ENCODE measurements at regions of chr4 and their contacts with region 1.

Region 1: DNA sequence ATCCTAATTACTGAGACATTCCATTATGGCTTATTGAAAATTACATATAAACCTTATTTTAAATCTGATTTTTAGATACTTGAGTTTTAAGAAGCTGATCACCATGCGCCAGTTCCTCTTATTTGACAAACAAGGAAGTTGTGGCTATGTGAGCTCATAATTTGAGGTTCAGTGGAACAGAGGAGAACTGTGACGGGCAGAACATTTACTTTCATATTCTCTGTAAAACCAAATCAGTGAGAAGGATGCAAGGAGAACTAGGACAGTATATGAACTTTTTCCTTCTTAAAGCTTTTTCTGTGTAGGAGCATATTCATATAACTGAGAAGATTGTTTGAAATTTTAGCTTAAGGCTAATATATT is 25.3 kb downstream of the STIM2 start:
- DNase-seq: no peak
- ATAC-seq: peak; percentile 67
- H3K4me3 Mint-ChIP-seq: peak overlapping the region; percentile 73
- H3K27ac Mint-ChIP-seq: peak overlapping the region; percentile 95
- H3K4me1 Mint-ChIP-seq: peaks cover 90% of the 10 kb centered on the region
- H3K27me3 Mint-ChIP-seq: no peaks in the 10 kb centered on the region
- CTCF ChIP-seq: no peak

Region 2: DNA sequence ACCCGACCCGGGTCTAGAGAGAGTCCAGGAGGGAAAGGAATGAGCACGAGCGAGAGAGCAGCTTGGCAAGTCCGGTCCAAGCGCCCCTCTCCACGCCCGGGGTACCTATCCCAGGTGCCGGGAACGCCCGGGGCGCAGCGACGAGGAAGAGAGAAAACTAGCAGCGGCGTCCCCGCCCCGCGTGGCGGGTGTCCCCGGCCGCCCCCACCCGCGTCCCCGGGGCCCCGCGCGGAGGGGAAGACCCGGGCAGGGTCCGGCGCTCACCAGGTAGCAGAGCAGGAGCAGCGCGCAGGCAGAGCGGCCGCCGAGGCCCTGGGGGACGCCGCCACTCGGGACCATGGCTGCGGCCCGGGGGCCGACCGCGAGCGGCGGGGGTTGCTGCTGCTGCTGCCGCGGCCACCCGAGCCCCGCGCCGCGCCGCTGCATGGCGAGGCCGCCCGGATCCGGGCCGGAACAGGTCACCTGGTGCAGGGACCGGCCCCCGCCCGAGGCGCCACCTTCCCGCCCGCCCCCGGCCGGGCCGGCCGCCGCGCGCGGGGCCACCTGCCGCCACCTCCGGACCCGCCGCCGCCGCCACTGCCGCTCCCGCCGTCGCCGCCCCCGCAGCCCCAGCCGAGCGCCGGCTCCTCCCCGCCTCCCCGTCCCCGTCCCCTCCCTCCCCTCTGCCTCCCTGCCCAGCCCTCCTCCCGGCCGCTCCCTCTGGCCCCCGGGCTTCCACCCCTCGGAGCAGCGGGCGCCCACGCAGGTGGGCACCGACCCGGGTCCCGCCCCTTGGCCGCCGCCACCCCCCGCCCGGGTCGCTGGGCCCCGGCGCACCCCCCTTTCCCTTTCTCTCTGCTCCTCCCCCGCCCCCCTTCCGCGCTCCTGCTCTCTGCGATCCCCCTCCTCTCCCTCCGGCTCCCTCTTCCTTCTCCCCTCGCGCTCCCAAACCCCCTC is 1023.2 kb before region 1 on chr4 and contains the start of gene SEL1L3:
- CTCF ChIA-PET with region 1: no interaction called
- POLR2A ChIA-PET with region 1: no interaction called
- intact Hi-C with region 1: loop called (anchors 5 kb)
- DNase-seq: peak; percentile 68
- ATAC-seq: peak; percentile 39
- H3K4me3 Mint-ChIP-seq: peak within 1 kb of the TSS; percentile 98
- H3K27ac Mint-ChIP-seq: peak within 1 kb of the TSS; percentile 99
- H3K4me1 Mint-ChIP-seq: peaks cover 84% of the 10 kb centered on the region
- H3K27me3 Mint-ChIP-seq: no peaks in the 10 kb centered on the region
- CTCF ChIP-seq: no peak
- total RNA-seq, gene SEL1L3: 102 and 113 TPM in 2 replicates

Region 3: DNA sequence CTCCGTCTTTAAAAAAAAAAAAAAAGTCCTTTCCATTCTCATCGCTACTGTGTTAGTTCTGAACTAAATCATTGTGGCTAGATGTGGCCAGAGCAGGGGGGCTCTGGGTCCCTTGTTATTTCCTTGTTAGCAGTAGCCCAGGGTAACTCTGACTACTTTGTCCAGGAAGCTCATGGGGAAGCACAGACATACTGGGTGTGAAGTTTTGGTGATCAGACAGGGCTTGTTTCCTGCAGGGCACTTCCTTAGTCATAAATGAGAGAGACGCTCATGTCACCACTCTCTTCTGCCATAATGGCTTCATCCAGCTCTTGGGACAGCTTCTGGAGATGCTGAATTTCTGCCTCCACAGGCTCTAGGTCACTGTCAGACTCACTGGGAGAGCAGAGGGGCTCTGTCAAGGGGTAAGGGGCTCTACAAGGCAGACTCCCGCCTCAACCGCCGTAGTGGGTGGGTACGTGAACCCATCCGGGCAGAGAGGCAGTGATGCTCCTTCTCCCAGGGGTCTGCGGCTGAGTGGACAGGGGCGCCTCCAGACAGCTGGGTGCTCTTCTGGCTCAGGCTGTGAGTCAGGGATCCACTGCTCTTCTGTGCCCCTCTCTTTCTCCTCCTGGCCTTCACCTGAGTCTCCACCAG is 12.4 kb before region 1 on chr4:
- CTCF ChIA-PET with region 1: interaction called, 4 read pairs
- POLR2A ChIA-PET with region 1: interaction called, 29 read pairs
- intact Hi-C with region 1: loop called (anchors 1 kb)
- DNase-seq: no peak
- ATAC-seq: peak; percentile 87
- H3K4me3 Mint-ChIP-seq: peak overlapping the region; percentile 64
- H3K27ac Mint-ChIP-seq: peak overlapping the region; percentile 85
- H3K4me1 Mint-ChIP-seq: peaks cover 82% of the 10 kb centered on the region
- H3K27me3 Mint-ChIP-seq: no peaks in the 10 kb centered on the region
- CTCF ChIP-seq: no peak

Region 4: DNA sequence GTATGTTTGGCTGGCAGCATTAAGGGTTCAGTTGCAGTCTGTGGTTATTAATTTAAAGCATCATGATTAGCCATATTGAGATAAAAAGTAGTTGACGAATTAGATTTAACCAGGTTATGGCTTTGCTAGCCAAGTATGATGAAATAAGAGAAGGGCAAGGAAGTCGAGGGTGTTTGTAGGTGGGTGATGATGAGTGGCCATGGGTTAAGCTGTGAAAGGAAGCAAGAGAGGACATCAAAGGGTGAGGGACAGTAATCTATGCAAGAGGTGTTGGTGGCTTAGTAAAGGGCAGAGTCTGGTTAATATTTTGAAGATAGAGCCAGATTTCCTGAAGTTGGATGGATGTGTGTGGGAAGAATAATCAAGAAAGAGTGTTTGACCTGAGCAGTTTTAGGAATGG is 19.3 kb after region 1 on chr4:
- CTCF ChIA-PET with region 1: no interaction called
- POLR2A ChIA-PET with region 1: interaction called, 5 read pairs
- intact Hi-C with region 1: loop called (anchors 2 kb)
- DNase-seq: no peak
- ATAC-seq: no peak
- H3K4me3 Mint-ChIP-seq: no peak overlapping the region
- H3K27ac Mint-ChIP-seq: peak overlapping the region; percentile 25
- H3K4me1 Mint-ChIP-seq: peaks cover 79% of the 10 kb centered on the region
- H3K27me3 Mint-ChIP-seq: no peaks in the 10 kb centered on the region
- CTCF ChIP-seq: no peak

Region 5: DNA sequence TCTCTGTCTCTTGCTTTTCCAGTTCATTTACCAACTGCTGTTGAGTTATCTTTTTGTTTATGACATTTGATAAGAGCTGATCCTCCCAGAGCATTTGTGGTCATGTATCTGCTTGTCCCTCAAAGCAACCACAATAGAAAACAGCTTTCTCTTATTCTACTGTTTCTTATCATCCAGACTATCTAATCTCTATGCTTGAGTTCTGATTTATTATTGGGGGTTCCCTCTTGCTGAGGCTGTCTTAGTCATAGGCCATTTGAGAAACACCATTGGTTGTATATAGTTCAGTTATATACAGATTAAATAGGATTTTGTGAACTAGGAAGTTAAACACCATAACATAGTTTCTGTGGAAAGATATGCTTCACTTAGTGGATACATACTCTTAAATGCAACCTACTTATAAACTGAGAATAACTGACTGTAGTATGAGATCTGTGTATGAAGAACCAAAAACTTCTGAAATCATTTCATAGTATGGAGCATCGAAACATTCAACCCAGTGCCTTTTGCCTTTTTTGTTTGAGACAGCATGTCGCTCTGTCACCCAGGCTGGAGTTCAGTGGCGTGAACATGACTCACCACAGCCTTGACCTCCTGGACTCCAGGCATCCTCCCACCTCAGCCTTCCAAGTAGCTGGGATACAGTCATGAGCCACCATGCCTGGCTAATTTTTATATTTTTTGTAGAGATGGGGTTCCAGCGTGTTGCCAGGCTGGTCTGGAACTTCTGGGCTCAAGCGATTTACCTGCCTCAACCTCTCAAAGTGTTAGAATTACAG is 50.6 kb after region 1 on chr4:
- CTCF ChIA-PET with region 1: no interaction called
- POLR2A ChIA-PET with region 1: interaction called, 3 read pairs
- intact Hi-C with region 1: loop called (anchors 2 kb)
- DNase-seq: no peak
- ATAC-seq: no peak
- H3K4me3 Mint-ChIP-seq: no peak overlapping the region
- H3K27ac Mint-ChIP-seq: peak overlapping the region; percentile 46
- H3K4me1 Mint-ChIP-seq: peaks cover 68% of the 10 kb centered on the region
- H3K27me3 Mint-ChIP-seq: no peaks in the 10 kb centered on the region
- CTCF ChIP-seq: no peak